BJ (cell line): ENCODE measurements at regions of chr20 and their contacts with region 1.

Region 1: GRCh38 chr20:31822421-31823330 is 3.5 kb downstream of the MYLK2 start:
- DNase-seq: no peak
- H3K4me3 ChIP-seq: peak overlapping the region; percentile 7; the same call in 1 of the 2 replicates
- H3K27me3 ChIP-seq: no peaks in the 10 kb centered on the region
- CTCF ChIP-seq: peak; percentile 97

Region 2: DNA sequence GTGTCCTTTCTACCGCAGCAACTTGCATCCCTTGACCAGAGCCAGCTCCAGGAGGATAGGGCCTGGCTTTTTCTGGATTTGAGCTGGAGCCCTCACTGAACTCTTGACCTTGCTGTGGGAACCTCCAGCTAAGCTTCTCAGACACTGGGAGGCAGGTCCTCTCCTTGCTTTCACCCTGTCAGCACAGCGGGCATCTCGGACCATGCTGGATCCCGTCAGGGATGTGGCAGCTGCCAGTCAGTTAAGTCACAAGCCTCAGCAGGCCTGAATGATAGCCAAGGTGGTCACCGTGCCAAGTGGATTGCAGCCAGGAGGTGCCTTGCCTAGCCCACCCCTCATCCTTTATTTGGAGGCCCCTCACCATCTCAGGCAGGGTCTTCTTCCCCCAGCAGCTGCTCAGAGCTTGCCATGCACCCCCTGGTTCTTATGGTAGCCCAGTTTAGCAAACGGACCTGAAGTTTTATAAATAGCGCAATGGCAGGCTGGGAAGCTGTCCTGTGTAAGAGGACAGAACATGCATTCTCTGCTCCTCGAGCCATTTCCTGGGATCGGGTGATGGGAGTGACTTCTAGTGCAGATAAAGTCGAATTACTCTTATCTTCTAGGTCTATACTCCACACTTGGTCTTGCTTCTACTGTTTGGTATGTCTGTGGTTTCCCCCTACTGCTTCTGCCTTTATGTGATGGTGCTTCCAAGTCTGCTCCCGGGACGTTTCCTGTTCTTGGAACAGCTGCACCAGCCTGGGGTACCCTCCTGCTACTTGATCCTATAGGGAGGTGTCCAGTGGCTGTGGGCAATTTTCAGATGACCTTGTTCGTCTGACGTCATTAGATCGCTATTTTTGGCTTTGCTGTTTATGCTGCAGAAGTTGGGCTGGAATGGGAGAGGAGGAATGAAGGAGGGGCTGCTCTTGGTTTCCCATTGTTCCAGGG is 10.6 kb before region 1 on chr20:
- CTCF ChIA-PET with region 1: interaction called, 20 read pairs
- POLR2A ChIA-PET with region 1: no interaction called
- DNase-seq: no peak
- H3K4me3 ChIP-seq: no peak overlapping the region
- H3K27me3 ChIP-seq: no peaks in the 10 kb centered on the region
- CTCF ChIP-seq: no peak

Region 3: GRCh38 chr20:31835977-31836852 is 13.5 kb after region 1 on chr20:
- CTCF ChIA-PET with region 1: interaction called, 105 read pairs
- POLR2A ChIA-PET with region 1: no interaction called
- DNase-seq: peak; percentile 41
- H3K4me3 ChIP-seq: no peak overlapping the region
- H3K27me3 ChIP-seq: 0 out of 2 replicates have a peak, but pooled peaks cover 2% of the 10 kb centered on the region
- CTCF ChIP-seq: no peak

Region 4: DNA sequence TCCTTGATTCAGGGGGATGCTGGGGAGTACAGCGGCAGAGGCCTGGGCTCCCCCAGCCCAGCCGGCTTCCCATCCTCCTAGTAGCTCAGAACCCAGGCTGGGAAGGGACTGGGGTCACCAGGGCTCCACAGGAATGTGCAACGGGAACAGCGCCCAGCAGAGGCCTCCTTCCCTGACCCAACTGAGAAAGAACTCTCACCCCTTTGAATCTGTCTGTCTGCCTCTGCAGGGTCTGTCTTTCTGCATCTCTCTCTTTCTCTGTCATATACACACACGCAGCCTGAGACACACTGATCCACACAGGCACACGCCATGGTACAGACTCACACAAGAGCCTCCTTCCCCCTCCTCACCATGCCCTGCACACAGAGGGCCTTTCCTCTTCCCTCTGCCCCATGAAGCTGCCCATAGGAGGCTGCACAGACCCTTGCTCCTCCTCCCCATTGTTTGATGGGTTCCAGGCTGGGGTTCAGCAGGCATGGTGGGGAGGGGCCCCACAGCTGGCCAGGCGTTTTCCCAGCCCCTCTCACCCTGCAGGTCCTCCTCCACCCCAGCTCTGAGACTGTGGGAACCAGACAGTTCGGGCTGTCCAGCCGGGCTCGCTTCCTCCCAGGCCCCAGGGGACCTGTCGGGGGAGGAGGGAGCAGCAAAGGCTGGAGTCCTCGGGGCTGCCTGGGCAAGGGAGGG is 19.9 kb after region 1 on chr20:
- CTCF ChIA-PET with region 1: interaction called, 180 read pairs
- POLR2A ChIA-PET with region 1: no interaction called
- DNase-seq: no peak
- H3K4me3 ChIP-seq: no peak overlapping the region
- H3K27me3 ChIP-seq: no peaks in the 10 kb centered on the region
- CTCF ChIP-seq: no peak

Region 5: GRCh38 chr20:31856516-31856915 is 33.8 kb after region 1 on chr20:
- CTCF ChIA-PET with region 1: interaction called, 180 read pairs
- POLR2A ChIA-PET with region 1: no interaction called
- DNase-seq: no peak
- H3K4me3 ChIP-seq: no peak overlapping the region
- H3K27me3 ChIP-seq: peaks cover 44% of the 10 kb centered on the region
- CTCF ChIP-seq: no peak

Region 6: DNA sequence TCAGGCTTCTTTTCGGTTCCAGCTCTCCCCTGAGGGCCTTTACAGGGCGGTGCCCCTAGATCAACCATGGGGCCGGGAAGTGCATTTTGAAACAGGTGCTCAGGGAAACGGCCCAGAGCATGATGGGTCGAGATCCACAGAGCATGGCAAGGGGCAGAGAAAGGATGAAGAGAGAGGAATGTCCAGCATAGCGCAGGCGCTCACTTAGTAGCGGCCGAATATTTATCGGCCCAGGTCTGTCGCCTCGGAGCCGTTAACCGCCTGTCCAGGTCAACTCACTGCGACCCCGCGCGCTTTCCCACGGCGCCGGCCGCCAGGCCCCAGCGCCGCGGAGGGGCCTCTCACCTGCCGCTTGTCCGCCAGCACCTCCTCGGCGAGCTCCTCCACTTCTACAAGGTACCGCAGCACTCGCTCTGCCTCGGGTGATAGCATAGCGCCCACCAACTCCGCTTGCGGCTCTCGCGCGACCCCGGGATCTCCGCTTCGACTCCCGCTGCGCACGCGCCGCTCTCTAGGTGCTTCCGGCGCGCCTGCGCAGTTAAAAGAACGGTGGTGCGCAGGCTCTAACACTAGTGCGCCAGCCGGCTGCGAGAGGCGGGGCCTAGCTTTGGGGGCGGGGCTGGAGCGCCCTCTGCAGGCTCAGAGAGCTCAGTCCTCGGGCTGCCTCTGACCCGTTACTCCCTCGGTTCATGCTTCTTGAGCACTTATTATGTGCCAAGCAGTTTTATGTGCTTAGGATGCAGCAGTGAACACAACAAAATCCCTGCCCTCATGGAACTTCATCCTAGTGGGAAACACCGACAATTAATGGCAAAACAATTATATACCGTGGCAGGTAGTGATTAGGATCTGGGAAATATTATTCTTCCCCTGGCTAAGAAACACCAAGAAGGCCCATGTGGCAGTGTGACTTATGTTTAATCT is 129.1 kb after region 1 on chr20 and contains the start of gene PDRG1:
- CTCF ChIA-PET with region 1: interaction called, 17 read pairs
- POLR2A ChIA-PET with region 1: no interaction called
- DNase-seq: peak; percentile 68
- H3K4me3 ChIP-seq: peak within 1 kb of the TSS; percentile 56
- H3K27me3 ChIP-seq: peaks cover 4% of the 10 kb centered on the region
- CTCF ChIP-seq: peak; percentile 99
- polyA plus RNA-seq, gene PDRG1: 13.9 and 16.5 TPM in 2 replicates

Region 7: GRCh38 chr20:32091888-32092346 is 269.2 kb after region 1 on chr20:
- CTCF ChIA-PET with region 1: interaction called, 13 read pairs
- POLR2A ChIA-PET with region 1: no interaction called
- DNase-seq: no peak
- H3K4me3 ChIP-seq: no peak overlapping the region
- H3K27me3 ChIP-seq: peaks cover 12% of the 10 kb centered on the region
- CTCF ChIP-seq: peak; percentile 96